Calu3 (cell line): ENCODE measurements at regions of chr15 and their contacts with region 1.

Region 1: GRCh38 chr15:73950831-73951561 is 24.7 kb downstream of the LOXL1 start:
- DNase-seq: peak; percentile 93
- H3K4me3 Mint-ChIP-seq: no peak overlapping the region
- H3K27ac Mint-ChIP-seq: peak overlapping the region; percentile 52
- H3K4me1 Mint-ChIP-seq: peaks cover 12% of the 10 kb centered on the region
- H3K27me3 Mint-ChIP-seq: no peaks in the 10 kb centered on the region
- CTCF ChIP-seq: peak; percentile 79

Region 2: GRCh38 chr15:73964736-73965093 is 13.7 kb after region 1 on chr15:
- CTCF ChIA-PET with region 1: interaction called, 52 read pairs
- intact Hi-C with region 1: no loop called
- DNase-seq: peak; percentile 91
- H3K4me3 Mint-ChIP-seq: no peak overlapping the region
- H3K27ac Mint-ChIP-seq: peak overlapping the region; percentile 19
- H3K4me1 Mint-ChIP-seq: peaks cover 23% of the 10 kb centered on the region
- H3K27me3 Mint-ChIP-seq: no peaks in the 10 kb centered on the region
- CTCF ChIP-seq: peak; percentile 96

Region 3: GRCh38 chr15:74036271-74037170 is 85.5 kb after region 1 on chr15:
- CTCF ChIA-PET with region 1: interaction called, 20 read pairs
- intact Hi-C with region 1: no loop called
- DNase-seq: peak; percentile 62
- H3K4me3 Mint-ChIP-seq: no peak overlapping the region
- H3K27ac Mint-ChIP-seq: no peak overlapping the region
- H3K4me1 Mint-ChIP-seq: no peaks in the 10 kb centered on the region
- H3K27me3 Mint-ChIP-seq: no peaks in the 10 kb centered on the region
- CTCF ChIP-seq: peak; percentile 72

Region 4: GRCh38 chr15:74291101-74292071 is 340.4 kb after region 1 on chr15:
- CTCF ChIA-PET with region 1: no interaction called
- intact Hi-C with region 1: no loop called
- DNase-seq: peak; percentile 89
- H3K4me3 Mint-ChIP-seq: no peak overlapping the region
- H3K27ac Mint-ChIP-seq: no peak overlapping the region
- H3K4me1 Mint-ChIP-seq: no peaks in the 10 kb centered on the region
- H3K27me3 Mint-ChIP-seq: peaks cover 92% of the 10 kb centered on the region
- CTCF ChIP-seq: no peak